ENCODE measurements at regions of chr13 and their contacts with region 1.

Region 1: DNA sequence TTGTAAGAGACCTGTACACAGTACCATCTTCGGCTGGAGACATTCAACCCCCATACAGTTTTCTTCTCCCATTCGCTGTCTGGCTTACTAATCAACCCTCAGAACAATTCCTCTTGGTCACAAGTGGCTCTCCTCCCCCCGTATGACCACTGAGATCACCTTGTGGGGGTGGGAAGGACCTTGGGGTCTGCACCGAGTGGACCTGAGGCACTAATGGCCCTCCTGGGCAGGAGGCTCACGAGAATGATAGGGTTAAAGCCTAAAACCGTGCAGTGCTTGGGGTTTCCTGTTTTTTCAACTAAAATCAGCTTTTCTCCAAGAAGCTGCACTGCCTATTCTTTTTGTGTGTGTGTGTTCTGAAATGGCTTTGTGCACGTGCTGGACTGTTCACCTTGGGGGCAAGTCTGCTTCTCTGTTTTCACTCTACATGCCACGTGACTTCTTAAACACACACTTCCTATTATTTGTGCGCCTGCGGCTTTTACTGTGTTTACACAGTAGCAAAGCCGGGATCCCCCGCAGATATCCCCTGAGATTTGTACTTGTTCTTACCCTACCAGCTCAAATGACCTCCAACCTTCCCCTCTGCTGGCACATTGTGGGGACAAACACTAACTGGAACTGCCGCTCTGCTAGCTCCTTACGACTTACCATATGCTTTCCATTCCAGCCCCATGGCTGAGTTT is 12.3 kb downstream of the RBM26 start:
- DNase-seq: peak; percentile 45
- H3K4me3 Mint-ChIP-seq: peak overlapping the region; percentile 35
- H3K27ac Mint-ChIP-seq: peak overlapping the region; percentile 50
- H3K4me1 Mint-ChIP-seq: peaks cover 46% of the 10 kb centered on the region
- H3K27me3 Mint-ChIP-seq: no peaks in the 10 kb centered on the region

Region 2: GRCh38 chr13:79328510-79328909 is 65.2 kb before region 1 on chr13:
- CTCF ChIA-PET with region 1: no interaction called
- POLR2A ChIA-PET with region 1: no interaction called
- DNase-seq: no peak
- H3K4me3 Mint-ChIP-seq: no peak overlapping the region
- H3K27ac Mint-ChIP-seq: no peak overlapping the region
- H3K4me1 Mint-ChIP-seq: peaks cover 6% of the 10 kb centered on the region
- H3K27me3 Mint-ChIP-seq: no peaks in the 10 kb centered on the region

Region 3: GRCh38 chr13:79382545-79383289 is 11.0 kb before region 1 on chr13:
- CTCF ChIA-PET with region 1: interaction called, 29 read pairs
- POLR2A ChIA-PET with region 1: interaction called, 4 read pairs
- DNase-seq: no peak
- H3K4me3 Mint-ChIP-seq: peak overlapping the region; percentile 1
- H3K27ac Mint-ChIP-seq: peak overlapping the region; percentile 51
- H3K4me1 Mint-ChIP-seq: peaks cover 54% of the 10 kb centered on the region
- H3K27me3 Mint-ChIP-seq: no peaks in the 10 kb centered on the region

Region 4: DNA sequence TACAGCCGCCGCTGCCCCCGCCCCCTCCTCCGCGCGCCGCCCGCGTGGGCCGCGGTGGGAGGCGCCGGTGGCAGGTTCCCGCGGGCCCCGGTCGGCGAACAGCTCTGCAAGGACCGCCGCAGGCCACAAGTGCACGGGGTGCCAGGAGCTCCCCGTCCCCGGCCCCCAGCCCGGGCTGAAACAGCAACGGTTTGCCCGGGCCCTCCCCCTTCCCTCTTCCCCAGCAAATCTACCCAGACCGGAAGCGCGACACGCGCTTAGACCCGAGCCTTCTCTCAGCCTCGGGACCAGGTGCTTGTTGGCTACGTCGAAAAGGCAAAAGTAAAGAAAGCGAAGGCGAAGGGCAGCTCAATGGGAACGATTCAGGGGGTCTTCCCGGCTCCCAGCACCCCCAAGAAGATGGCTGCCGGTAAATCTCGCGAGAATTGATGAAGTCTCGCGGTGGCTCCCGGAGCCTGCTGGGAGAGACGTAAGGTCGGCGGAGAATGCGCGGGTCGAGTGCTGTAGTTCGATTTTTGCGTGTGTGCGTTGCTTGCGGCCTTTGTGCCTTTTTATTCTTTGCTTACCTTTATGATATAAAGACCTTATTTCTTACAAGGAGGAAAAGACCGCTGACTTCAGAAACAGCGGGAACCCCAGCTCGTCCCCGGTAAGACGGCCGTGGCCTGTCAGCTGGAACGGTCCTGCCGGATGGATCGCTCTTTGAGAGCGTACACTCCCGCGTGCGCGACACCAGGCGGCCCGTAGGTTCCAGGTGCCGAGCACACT is 12.3 kb after region 1 on chr13 and contains the start of gene RBM26:
- CTCF ChIA-PET with region 1: interaction called, 13 read pairs
- POLR2A ChIA-PET with region 1: interaction called, 55 read pairs
- DNase-seq: peak; percentile 94
- H3K4me3 Mint-ChIP-seq: peak within 1 kb of the TSS; percentile 89
- H3K27ac Mint-ChIP-seq: peak within 1 kb of the TSS; percentile 93
- H3K4me1 Mint-ChIP-seq: peaks cover 13% of the 10 kb centered on the region
- H3K27me3 Mint-ChIP-seq: no peaks in the 10 kb centered on the region
- total RNA-seq, gene RBM26: 51.1 to 52.0 TPM

Region 5: DNA sequence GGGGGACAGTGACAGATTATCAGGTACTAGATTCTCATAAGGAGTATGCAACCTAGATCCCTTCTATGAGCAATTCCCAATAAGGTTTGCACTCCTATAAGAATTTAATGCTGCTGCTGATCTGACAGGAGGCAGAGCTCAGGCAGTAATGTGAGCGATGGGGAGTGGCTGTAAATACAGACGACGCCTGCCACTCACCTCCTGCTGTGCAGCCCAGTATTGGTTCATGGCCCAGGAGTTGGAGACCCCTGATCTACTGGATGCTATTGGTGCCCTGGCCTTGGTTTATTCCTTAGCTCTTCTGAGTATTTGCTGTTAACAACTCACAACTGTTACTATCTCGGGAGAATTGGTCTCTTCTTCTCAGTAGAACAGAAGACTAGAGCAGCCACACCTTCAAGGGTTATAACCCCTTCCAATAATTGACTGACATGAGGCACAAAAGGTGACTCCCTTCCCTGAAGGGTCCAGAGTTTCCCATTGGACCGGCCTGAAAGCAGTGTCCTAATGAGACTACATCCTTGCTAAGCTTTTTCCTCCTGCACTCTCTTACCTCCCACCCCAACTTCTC is 47.3 kb after region 1 on chr13:
- CTCF ChIA-PET with region 1: no interaction called
- POLR2A ChIA-PET with region 1: no interaction called
- DNase-seq: no peak
- H3K4me3 Mint-ChIP-seq: no peak overlapping the region
- H3K27ac Mint-ChIP-seq: no peak overlapping the region
- H3K4me1 Mint-ChIP-seq: peaks cover 7% of the 10 kb centered on the region
- H3K27me3 Mint-ChIP-seq: no peaks in the 10 kb centered on the region

Measured in activated CD4-positive, alpha-beta memory T cell treated with anti-CD3 and anti-CD28 coated beads, Interleukin-2, amount 10 ng/mL, durations not matched to agents 7 days and 5 days (primary cell).